Common myeloid progenitor, CD34-positive (primary cell): ENCODE measurements at regions of chr2 and their contacts with region 1.

Region 1: DNA sequence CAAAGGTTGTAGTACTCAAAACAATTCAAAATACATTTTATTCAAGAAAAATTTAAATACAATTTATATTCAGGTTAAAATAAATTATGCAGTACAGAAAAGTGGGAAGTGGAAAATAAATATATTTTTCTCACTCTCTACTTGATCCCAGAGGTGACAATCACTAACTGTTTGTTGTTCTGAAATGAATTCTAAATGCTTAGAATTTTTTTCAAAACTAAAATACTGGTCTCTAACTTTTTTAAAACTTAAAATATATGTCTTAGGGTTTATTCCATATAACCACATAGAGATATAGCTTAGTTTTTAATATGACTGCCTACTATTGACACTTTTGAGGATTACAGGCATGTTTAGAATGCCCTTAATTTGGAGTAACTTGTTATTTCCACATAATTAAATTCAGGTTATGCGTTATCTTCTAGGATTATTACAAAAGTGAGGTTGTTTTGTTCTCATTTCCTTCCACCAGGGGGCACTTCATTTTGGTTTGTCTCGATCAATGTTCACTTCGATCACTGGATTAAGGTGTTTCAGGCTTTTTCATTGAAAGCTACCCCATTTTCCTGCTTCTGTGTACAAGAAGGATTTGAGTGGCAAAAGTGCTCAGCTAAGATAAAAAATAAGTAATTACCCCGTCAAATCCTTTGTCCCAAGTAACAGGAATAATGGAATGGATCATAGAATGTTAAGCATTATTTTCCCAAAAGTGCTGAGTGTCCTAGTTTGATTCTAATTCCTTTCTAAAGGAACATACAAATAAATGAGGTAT is 27.1 kb upstream of the TFPI start:
- DNase-seq: peak; percentile 63 to 72 (median 66)
- H3K4me3 ChIP-seq: peak overlapping the region in 6 of 7 experiments; percentile 26 to 75 (median 48)
- H3K27ac ChIP-seq: peak overlapping the region; percentile 40 to 81
- H3K4me1 ChIP-seq: peaks cover 3 to 11% (median 8%) of the 10 kb centered on the region in 4 experiments
- H3K27me3 ChIP-seq: no peaks in the 10 kb centered on the region

Region 2: GRCh38 chr2:186925514-186925913 is 655.8 kb before region 1 on chr2:
- CTCF ChIA-PET with region 1: no interaction called
- POLR2A ChIA-PET with region 1: no interaction called
- DNase-seq: peak in 2 of 3 donors; percentile 17 to 21
- H3K4me3 ChIP-seq: peak overlapping the region in 1 of 7 experiments; percentile 13
- H3K27ac ChIP-seq: no peak overlapping the region
- H3K4me1 ChIP-seq: peaks cover 3 to 8% (median 7%) of the 10 kb centered on the region in 4 experiments
- H3K27me3 ChIP-seq: no peaks in the 10 kb centered on the region

Region 3: GRCh38 chr2:187554011-187554703 is 27.2 kb before region 1 on chr2 and contains the start of gene TFPI:
- CTCF ChIA-PET with region 1: interaction called, 13 read pairs
- POLR2A ChIA-PET with region 1: interaction called, 3 read pairs
- DNase-seq: peak; percentile 58 to 86 (median 79)
- H3K4me3 ChIP-seq: peak within 1 kb of the TSS in 6 of 7 experiments; percentile 75 to 100 (median 94)
- H3K27ac ChIP-seq: peak within 1 kb of the TSS; percentile 97 to 98
- H3K4me1 ChIP-seq: peaks cover 7 to 48% (median 12%) of the 10 kb centered on the region in 4 experiments
- H3K27me3 ChIP-seq: no peaks in the 10 kb centered on the region

Region 4: GRCh38 chr2:187567126-187567525 is 14.2 kb before region 1 on chr2:
- CTCF ChIA-PET with region 1: interaction called, 28 read pairs
- POLR2A ChIA-PET with region 1: no interaction called
- DNase-seq: peak in 2 of 3 donors; percentile 44 to 49
- H3K4me3 ChIP-seq: no peak overlapping the region
- H3K27ac ChIP-seq: no peak overlapping the region
- H3K4me1 ChIP-seq: no peaks in the 10 kb centered on the region
- H3K27me3 ChIP-seq: no peaks in the 10 kb centered on the region

Region 5: GRCh38 chr2:187658952-187659525 is 77.7 kb after region 1 on chr2:
- CTCF ChIA-PET with region 1: no interaction called
- POLR2A ChIA-PET with region 1: no interaction called
- DNase-seq: peak in 2 of 3 donors; percentile 10 to 18
- H3K4me3 ChIP-seq: no peak overlapping the region
- H3K27ac ChIP-seq: no peak overlapping the region
- H3K4me1 ChIP-seq: no peaks in the 10 kb centered on the region
- H3K27me3 ChIP-seq: no peaks in the 10 kb centered on the region

Region 6: DNA sequence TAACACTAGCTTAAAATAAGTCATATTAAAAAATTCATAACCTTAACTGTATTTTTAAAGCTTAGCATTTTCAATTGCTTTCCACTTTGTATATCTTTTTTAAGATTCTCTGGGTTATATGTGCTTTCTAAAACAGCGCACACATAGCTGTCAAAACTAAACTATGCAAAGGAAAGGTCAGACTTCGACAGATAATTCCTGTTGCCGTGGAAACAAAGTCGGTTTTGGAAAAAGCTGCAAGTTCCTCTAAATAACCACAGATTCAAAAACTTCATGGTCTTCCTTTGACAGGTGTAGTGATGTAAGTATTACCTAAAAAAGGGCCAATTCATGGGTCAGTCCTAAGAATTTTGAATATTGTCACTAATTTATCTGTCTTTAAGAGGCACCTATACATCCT is 222.5 kb after region 1 on chr2:
- CTCF ChIA-PET with region 1: no interaction called
- POLR2A ChIA-PET with region 1: no interaction called
- DNase-seq: no peak
- H3K4me3 ChIP-seq: no peak overlapping the region
- H3K27ac ChIP-seq: no peak overlapping the region
- H3K4me1 ChIP-seq: no peaks in the 10 kb centered on the region
- H3K27me3 ChIP-seq: no peaks in the 10 kb centered on the region

Region 7: DNA sequence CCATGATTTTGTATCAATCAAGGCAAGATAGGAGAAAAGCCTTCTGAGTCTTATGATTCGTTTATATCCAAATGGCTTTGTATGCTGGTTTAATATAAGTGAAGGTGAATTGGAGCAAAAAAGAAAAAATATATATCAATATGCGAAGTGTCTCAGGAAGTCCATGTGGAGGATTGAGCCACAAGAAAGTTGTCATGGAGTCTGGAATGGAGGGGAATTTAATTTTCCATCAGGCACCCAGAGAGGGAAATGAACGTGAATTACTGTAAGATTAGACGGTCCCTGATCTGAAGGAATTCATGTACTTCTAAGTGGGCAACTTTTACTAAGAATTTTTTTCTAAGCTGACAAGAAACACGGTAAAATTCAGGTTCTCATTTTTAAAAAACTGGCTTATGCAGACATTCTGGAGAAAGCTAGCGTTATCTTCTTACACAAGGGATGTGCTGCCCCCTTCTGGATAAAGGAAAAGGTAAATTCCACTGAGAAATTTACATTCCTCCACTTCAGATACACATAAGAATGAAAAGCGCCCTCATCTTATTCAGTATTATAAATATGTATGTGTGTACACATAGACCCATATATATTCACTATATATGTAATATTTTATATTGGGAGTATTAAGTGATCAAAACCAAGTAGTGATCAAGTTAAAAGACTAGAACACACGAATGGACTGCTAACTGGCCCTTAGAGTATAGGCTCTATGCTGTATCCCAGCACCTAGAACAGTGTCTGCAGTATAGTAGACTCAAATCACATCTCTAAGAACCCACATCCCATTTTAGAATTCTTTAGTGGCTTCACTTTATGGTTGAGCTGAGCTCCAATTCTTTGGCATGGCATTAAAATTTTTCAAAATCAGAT is 261.9 kb after region 1 on chr2:
- CTCF ChIA-PET with region 1: interaction called, 34 read pairs
- POLR2A ChIA-PET with region 1: no interaction called
- DNase-seq: peak; percentile 63 to 81 (median 79)
- H3K4me3 ChIP-seq: no peak overlapping the region
- H3K27ac ChIP-seq: no peak overlapping the region
- H3K4me1 ChIP-seq: no peaks in the 10 kb centered on the region
- H3K27me3 ChIP-seq: peaks cover 0 to 3% (median 0%) of the 10 kb centered on the region in 5 experiments